Right ventricle myocardium inferior (tissue), 1 donor: ENCODE measurements at regions of chr14 and their contacts with region 1.

Region 1: GRCh38 chr14:75340921-75341320 is 62.3 kb downstream of the FOS start:
- DNase-seq: peak; percentile 90
- ATAC-seq: peak; percentile 93

Region 2: DNA sequence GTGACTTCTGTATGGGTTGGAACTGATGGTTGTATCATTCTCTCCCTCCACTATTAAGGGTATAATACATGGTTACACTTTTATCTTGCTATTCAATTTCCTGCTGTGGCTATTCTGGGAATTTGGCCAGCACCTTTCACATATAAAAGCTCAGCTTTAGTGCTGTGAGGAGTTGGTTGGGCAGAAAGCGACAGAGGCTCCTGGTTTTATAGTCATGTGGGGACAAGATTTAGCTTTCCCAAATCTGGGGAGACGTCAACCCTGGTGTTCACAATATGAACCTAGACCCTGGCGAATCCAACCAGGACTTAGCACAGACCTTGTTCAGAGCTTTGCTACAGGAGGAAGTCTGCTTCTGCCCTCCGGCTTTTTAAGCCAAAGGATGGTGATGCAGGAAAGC is 25.8 kb before region 1 on chr14:
- intact Hi-C with region 1: loop called (anchors 1 kb)
- DNase-seq: no peak
- ATAC-seq: peak; percentile 20

Region 3: DNA sequence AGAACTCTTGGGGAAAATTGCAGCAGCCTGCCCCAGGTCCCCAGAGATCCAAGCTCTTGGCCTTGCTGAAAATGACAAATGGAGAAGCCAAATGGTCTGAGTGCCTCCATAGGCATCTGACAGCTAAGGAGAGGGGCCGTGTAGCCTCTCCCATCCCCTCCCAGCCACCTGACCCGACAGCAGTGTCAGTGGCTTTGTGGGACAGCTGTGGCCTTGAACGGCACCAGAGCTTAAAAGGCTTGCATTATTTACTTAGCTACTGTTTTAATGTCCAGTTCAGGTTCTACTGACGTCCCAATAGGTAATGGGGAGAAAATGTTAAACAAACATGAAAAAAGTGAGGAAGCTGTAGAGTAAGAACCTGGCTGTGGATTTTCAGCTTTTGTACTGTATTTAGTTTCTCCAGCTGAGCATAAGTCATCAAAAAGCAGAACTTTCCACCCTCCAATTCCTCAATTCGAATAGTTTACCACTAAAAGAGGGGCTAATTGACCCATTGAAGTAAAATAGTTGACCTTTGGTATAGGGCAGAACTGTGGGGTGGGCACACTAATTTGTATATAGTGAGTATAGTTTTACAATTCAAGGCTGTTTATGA is 12.3 kb before region 1 on chr14:
- intact Hi-C with region 1: no loop called
- DNase-seq: no peak
- ATAC-seq: no peak

Region 4: GRCh38 chr14:75383721-75384120 is 42.8 kb after region 1 on chr14:
- intact Hi-C with region 1: no loop called
- DNase-seq: no peak
- ATAC-seq: peak; percentile 31

Region 5: DNA sequence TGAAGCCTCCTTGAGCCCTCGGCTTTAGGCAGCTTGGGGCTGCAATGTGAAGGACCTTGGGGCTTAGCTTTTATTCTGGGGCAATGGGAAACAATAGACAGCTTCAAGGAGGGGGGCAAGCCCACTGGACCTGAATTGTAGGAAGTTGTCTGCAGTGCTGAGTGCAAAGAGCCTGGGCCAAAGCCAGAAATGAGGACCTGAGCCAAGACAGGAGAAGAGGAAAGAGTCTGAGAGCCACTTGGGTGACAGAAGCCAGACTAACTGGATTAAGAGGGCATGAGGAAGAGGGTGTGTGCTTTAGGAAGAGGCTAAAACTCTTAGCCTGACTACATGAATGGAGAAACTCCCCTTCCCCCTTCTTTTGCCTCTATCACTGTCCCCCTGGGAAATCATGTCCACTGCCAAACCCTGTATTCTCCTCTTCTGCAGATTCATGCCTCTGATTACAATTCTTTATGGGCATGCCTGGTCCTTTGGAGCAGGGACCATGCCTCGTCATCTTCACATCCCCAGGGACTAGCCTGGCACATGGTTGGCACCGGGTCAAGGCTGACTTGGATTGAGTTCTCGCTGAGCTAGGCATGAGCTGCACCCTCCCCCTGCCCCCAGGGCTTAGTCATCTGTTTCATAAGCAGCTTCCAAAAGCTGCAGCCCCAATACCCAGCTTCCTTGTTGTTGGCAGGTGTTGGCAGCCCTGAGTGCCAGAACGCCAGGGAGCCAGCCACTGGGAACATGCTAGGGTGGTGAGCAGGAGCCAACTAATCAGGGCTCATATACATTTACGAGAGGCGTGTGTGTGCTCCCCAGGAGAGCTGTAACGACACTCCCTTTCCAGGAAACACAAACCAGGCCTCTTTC is 59.1 kb after region 1 on chr14:
- intact Hi-C with region 1: loop called (anchors 2 kb)
- DNase-seq: peak; percentile 92
- ATAC-seq: peak; percentile 88

Region 6: DNA sequence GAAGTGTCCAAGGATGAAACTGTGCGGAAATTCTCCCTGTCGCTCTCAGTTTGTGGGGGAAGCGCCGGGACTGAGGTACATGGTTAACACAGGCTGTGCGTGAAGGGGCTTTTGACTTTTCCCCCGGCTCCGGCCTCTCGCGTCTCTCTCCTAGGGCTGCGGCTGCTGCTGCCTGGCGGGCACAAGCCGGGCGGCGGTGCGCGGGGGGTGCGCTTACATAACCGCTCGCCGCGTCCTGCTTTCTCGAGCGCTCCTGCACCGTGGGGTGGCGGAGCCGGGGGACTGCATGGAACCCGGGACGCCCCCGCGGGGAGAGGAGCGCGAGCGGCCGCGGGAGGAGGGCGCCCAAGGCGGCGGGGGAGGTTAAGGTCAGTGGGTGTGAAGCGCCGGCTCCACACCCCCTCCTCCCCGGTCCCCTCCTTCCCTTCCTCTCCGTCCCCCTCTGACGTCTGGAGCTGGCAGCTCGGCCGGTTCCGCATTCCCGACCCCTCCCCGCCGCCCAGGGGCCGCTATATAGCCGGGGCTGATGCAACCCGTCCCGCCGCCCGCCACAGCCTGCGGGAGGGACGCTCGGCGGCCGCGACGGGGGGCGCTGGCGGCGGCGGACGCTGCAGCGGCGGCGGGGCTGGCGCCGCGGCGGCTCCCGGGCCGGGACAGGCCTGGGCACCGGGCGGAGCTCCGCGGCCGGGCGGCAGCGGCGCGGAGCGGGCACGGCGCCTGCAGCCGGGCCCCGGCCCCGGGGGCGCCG is 86.7 kb after region 1 on chr14 and contains the start of gene JDP2:
- intact Hi-C with region 1: loop called (anchors 2 kb)
- DNase-seq: peak; percentile 98
- ATAC-seq: peak; percentile 93
- total RNA-seq, gene JDP2: 27.2 TPM

Region 7: GRCh38 chr14:75864352-75864751 is 523.4 kb after region 1 on chr14:
- intact Hi-C with region 1: no loop called
- DNase-seq: no peak
- ATAC-seq: no peak